ENCODE measurements at regions of chr3 and their contacts with region 1.

Region 1: GRCh38 chr3:168134931-168135330 is 39.2 kb upstream of the GOLIM4 start:
- DNase-seq: peak; percentile 51

Region 2: DNA sequence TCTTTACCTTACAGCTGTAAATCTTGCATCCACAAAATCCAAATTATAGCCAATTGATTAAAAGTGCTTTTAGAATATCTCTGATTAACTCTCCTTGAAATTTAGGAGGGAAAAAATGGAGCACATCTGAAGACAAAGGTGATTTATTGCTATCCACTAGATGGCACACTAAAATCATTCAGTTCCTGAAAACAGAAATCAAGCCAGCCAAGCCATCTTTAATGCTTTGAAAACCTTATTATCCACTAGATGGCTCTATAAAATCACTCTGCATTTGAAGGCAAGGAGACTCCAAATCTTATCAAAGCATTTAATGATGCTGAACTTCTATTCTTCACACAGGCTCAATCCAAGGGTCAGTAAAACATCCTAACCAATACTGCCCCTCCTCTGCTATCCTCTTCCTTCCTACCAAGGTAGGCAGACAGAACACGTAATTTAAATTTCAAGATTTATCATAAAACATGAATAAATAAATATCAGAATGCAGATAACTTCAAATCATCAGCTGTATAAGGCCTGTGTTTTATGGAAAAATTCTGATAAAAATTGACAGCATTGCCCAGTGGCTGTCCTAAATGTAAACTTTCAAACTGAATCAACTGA is 87.6 kb before region 1 on chr3:
- in situ Hi-C with region 1: loop called (anchors 25 kb)
- DNase-seq: peak; percentile 77

Measured in Caki2 (cell line).